ENCODE measurements at regions of chr17 and their contacts with region 1.

Region 1: DNA sequence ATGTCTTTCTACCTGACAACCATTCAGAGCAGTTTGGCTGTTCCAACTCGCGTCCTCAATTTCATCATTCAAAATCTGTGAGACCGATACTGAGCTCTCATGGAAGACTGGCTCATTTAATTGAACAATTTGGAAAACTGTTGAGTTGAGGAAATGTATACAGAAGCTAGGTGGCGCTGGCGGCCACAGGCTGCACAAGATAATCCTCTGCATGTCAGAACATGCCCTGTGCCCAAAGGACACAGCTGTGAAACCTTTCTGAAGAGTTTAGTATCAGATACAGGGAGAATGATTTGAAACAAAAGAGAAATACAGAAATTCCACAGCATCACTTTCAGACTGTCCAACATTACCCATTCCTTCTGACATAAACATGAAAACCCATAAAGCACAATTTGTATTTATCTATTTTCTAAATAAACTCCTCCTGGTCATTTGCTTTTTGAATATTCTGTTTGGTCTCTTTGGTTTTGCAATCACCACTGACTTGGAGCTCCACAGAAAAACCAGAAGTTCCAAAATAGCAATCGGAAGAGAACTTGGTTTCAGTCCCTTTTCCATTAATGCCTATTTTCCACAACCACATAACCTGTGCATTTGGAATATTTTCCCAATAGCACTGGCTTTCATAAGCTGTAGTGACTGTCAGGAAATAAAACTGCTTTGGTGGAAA is 192.8 kb downstream of the MAP2K6 start:
- DNase-seq: no peak
- H3K4me3 ChIP-seq: no peak overlapping the region
- H3K27me3 ChIP-seq: no peaks in the 10 kb centered on the region
- CTCF ChIP-seq: peak; percentile 86

Region 2: GRCh38 chr17:69567130-69567529 is 40.2 kb before region 1 on chr17:
- CTCF ChIA-PET with region 1: interaction called, 43 read pairs
- POLR2A ChIA-PET with region 1: no interaction called
- DNase-seq: no peak
- H3K4me3 ChIP-seq: no peak overlapping the region
- H3K27me3 ChIP-seq: peaks cover 3% of the 10 kb centered on the region; the same call in 1 of the 2 replicates
- CTCF ChIP-seq: no peak

Region 3: GRCh38 chr17:69757688-69758430 is 150.6 kb after region 1 on chr17:
- CTCF ChIA-PET with region 1: interaction called, 18 read pairs
- POLR2A ChIA-PET with region 1: no interaction called
- DNase-seq: peak; percentile 95
- H3K4me3 ChIP-seq: no peak overlapping the region
- H3K27me3 ChIP-seq: no peaks in the 10 kb centered on the region
- CTCF ChIP-seq: no peak

Region 4: DNA sequence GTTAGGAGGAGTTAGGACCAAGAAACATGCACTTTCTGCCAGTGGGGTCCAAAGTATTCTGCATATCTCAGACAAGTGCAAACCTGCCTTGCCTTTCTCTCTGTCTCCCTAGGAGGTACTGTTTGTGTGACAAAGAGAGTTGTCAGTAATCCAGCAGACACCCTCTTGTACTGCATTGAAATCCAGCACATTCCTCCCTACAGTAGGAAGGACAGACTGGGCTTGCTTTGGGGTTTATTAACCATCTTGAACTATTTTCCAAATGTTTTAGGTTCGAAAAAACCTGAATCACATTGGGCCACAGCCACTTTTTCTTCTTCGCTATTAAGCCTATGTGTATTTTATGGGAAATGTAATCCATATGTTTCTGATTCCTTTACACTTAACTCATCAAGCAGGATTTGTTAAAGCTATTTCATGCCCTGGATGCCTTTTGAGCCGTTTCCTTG is 263.5 kb after region 1 on chr17:
- CTCF ChIA-PET with region 1: interaction called, 3 read pairs
- POLR2A ChIA-PET with region 1: interaction called, 17 read pairs
- DNase-seq: peak; percentile 66
- H3K4me3 ChIP-seq: no peak overlapping the region
- H3K27me3 ChIP-seq: no peaks in the 10 kb centered on the region
- CTCF ChIP-seq: no peak

Region 5: GRCh38 chr17:70144260-70144846 is 537.1 kb after region 1 on chr17:
- CTCF ChIA-PET with region 1: interaction called, 21 read pairs
- POLR2A ChIA-PET with region 1: no interaction called
- DNase-seq: no peak
- H3K4me3 ChIP-seq: no peak overlapping the region
- H3K27me3 ChIP-seq: no peaks in the 10 kb centered on the region
- CTCF ChIP-seq: peak; percentile 54; the same call in 1 of the 2 replicates